Lower leg skin (tissue), 4 donors: ENCODE measurements at regions of chr7 and their contacts with region 1.

Region 1: DNA sequence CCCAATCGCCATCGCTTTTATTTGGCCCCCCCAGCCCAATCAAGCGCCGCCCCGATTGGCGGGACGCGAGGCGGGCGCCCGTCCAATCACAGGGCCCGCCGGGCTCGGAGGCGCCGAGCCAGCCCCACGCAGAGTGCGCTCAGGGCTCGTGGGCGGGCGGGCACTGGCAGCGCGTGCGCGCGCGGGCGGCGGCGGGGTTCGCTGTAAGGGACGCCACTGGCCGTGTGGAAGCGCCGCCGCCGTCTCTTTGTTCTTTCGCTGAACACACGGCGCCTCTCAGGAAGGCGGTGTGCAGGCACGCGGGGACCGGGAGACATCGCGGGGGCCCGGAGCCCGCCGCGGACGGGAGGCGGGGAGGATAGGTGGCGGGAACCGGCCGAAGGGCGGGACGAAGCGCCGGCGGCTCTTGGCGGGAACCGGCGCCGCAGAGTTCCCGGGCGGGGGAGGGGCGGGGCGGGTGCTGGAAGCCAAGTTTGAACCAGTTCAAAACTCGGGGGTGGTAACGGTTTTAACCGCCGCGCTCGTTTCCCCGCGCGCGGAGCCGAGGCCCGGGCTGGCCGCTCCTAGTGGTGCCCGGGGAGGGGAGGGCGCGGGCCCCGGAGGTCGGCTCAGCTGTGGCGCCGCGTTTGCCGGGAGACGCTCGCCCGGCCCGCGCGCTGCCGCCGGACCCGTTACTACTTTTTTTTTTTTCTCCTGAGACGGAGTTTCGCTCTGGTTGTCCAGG is 370 bp upstream of the EZH2 start:
- DNase-seq: peak; percentile 87 to 98
- H3K4me3 ChIP-seq: peak overlapping the region; percentile 96
- CTCF ChIP-seq: no peak
- POLR2A ChIP-seq: peak in 1 of 2 donors; percentile 19

Region 2: DNA sequence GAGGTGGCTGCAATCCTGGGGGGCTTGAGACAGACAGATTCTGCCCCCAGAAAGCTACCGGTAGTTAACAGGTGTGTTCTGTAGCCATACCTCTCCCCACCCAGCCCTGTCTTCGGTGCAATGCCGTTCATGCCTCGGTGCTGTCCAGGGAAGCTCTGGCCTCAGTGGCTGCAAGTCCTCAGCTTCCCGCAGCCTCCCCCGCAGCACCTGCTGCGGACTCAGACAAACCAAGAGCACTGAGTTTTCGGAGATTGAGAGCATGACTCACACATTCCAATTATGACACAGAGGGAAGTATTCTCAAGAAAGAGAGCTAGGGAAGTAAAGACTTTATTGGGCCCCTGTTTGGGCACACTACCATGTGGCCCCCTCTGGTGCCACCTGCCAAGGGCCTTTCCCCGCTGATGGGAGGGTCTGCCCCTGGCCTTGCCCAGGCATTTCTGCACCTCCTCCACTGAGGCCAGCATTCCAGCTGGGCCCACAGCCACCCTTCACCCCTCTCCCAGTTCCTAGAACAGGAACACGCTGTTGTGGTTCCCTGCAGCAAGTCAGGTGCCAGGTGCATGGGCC is 29.8 kb after region 1 on chr7:
- intact Hi-C with region 1: no loop called
- DNase-seq: no peak
- H3K4me3 ChIP-seq: no peak overlapping the region
- CTCF ChIP-seq: no peak
- POLR2A ChIP-seq: no peak

Region 3: DNA sequence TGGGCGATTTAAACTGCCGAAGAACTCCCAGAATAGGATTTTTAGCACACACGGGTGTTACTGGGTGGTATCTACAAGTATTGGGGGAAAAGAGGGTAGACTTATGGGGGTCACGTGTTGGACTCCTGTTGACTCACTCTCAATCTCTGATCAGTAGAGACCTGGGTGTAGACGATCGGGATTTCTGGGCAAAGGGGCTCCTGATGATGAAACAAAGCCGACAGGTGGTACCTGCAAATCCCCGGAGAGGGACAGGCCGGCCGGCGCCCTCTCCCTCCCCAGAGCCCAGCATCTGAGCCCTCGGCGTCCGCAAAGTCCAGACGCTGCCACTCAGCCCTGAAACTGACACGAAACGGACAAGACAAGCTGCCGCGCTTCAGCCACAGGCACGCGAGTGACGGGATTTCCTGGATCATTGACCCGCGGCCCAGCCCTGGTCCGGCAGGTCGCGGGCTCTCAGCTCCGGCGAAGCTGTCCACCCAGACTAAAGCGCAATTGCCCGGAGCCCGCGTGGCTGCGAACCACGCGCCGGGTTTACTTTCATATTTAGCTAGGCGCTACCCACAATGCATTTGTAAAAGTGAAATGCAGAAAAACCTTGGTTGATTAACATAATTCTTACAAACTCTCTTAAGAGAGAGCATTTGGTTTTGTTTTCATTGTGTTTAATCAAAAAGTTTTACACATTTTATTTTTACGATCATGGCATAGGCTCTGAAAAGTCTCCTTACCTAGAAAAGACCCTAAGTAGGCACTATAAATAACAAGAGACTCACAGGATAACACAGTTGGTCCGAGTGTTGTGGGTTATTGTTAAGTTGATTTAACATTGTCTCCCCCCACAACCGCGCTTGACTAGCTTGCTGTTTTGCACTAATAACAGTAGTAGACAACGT is 56.5 kb after region 1 on chr7:
- intact Hi-C with region 1: loop called (anchors 10 kb)
- DNase-seq: peak; percentile 73 to 94
- H3K4me3 ChIP-seq: peak overlapping the region; percentile 62
- CTCF ChIP-seq: no peak
- POLR2A ChIP-seq: no peak